K562 (cell line): ENCODE measurements at regions of chr3 and their contacts with region 1.

Region 1: DNA sequence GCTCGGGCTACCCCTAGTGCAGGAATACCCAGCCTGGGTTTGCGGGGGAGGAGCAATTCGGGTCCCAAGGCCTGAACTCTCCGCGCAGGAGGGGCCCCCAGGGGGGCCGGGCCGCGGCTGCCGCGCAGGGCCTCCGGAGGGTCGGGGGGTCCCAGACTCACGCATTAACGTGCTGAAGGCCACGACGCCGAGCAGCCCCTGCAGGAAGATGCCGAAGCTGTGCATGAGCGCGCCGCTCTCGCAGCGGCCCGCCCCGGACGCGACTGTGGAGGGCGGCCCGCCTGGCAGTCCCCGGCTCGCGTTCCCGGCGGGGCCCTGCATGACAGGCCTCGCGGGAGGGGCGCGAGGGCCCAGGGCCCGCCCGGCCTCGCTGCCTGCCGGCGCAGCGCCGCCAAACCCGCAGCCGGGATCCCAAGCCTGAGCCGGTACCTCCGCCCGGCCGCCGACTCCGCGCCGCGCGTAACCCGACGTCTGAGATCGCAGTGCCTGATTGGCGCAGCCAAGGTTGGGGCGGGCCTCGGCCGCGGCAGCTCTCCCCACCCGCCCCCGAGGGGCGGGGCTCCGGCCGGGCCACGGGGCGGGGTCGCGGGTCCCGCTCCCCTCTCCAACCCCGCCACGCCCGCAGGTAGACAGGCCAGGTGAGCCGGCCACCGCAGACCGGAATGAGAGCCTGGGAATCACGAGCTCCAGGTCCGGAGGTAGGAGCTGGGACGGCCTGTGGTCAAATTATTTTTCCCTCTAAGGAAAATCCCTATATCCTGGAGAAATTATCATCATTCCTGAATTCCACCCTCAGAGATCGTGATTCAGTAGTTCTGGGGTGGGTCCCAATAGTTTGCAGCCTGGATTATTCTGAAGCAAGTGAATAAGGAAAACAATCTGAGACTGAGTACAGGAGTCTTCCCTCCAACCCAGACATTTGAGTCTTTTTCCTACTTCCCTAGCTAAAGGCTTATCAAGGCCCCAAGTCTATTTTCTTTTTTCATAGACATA is at the start of gene STIMATE:
- DNase-seq: peak; percentile 87 to 95 (median 92)
- ATAC-seq: peak; percentile 99
- H3K4me3 ChIP-seq: peak within 1 kb of the TSS; percentile 72
- H3K27ac ChIP-seq: no peak within 1 kb of the TSS
- H3K4me1 ChIP-seq: peaks cover 7 to 14% of the 10 kb centered on the region in 2 experiments; a peak in 4 of 5 replicates
- H3K27me3 ChIP-seq: no peaks in the 10 kb centered on the region
- CTCF ChIP-seq: no peak
- EP300 ChIP-seq: no peak
- POLR2A ChIP-seq: no peak
- RAD21 ChIP-seq: no peak
- polyA plus RNA-seq, gene STIMATE: 0.14 to 0.52 TPM

Region 2: GRCh38 chr3:52880474-52880873 is 17.0 kb before region 1 on chr3:
- CTCF ChIA-PET with region 1: no interaction called
- POLR2A ChIA-PET with region 1: interaction called, 11 read pairs
- in situ Hi-C with region 1: no loop called
- intact Hi-C with region 1: no loop called
- DNase-seq: no peak
- ATAC-seq: no peak
- H3K4me3 ChIP-seq: no peak overlapping the region
- H3K27ac ChIP-seq: no peak overlapping the region
- H3K4me1 ChIP-seq: peaks cover 0 to 9% of the 10 kb centered on the region in 2 experiments; a peak in 2 of 5 replicates
- H3K27me3 ChIP-seq: no peaks in the 10 kb centered on the region
- CTCF ChIP-seq: no peak
- EP300 ChIP-seq: no peak
- POLR2A ChIP-seq: no peak
- RAD21 ChIP-seq: no peak

Region 3: GRCh38 chr3:52912885-52913731 is 15.7 kb after region 1 on chr3:
- CTCF ChIA-PET with region 1: no interaction called
- POLR2A ChIA-PET with region 1: interaction called, 10 read pairs
- in situ Hi-C with region 1: no loop called
- intact Hi-C with region 1: no loop called
- DNase-seq: peak; percentile 35 to 88 (median 62)
- ATAC-seq: peak; percentile 98
- H3K4me3 ChIP-seq: no peak overlapping the region
- H3K27ac ChIP-seq: peak overlapping the region; percentile 48; the same call in 2 of the 3 replicates
- H3K4me1 ChIP-seq: peaks cover 6 to 20% of the 10 kb centered on the region in 2 experiments; a peak in 4 of 5 replicates
- H3K27me3 ChIP-seq: no peaks in the 10 kb centered on the region
- CTCF ChIP-seq: no peak
- EP300 ChIP-seq: peak; percentile 85
- POLR2A ChIP-seq: no peak
- RAD21 ChIP-seq: no peak